Colonic mucosa (tissue), 4 donors: ENCODE measurements at regions of chr22 and their contacts with region 1.

Region 1: DNA sequence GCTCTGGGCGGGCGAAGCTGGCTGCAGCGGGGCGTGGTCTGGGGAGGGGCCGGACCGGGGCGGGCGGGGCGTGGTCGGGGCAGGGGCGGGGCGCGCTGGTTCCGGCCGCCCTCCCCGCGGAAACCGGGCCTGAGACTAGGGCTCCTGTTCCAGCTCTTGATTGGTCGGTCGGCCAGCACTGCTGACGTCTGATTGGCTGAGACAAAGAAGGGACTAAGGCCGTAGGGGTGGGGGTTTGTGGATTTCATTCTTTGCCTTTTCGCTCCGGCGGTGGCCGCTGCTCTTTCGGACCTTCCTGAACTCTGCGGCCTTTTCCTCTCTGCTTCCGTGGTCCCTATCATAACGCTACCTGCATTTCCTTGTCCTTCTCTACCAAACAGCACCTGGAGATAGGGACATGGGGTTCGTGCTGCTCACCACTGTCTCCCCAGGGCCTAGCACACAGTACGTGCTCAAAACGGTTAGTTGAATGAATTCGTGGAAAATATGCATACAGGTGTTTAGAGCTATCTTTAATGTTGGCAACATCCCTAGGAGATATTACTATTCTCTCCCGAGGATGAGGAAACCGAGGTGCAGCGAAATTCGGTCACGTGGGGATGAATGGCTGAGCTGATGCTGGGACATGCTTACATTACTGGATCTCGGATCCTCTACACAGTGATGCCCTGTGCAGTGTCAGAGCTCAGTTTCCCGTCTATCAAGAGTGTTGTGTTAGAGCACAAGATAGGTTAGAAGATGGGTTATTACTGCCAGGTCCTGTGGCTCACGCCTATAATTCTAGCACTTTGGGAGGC is 62.8 kb downstream of the NFAM1 start:
- DNase-seq: peak; percentile 96
- H3K4me3 ChIP-seq: peak overlapping the region; percentile 55
- H3K27ac ChIP-seq: peak overlapping the region; percentile 42
- H3K4me1 ChIP-seq: no peaks in the 10 kb centered on the region
- H3K27me3 ChIP-seq: no peaks in the 10 kb centered on the region
- CTCF ChIP-seq: no peak

Region 2: GRCh38 chr22:42317008-42317407 is 52.4 kb before region 1 on chr22:
- intact Hi-C with region 1: loop called (anchors 5 kb)
- DNase-seq: peak; percentile 91
- H3K4me3 ChIP-seq: peak overlapping the region; percentile 27
- H3K27ac ChIP-seq: peak overlapping the region; percentile 91
- H3K4me1 ChIP-seq: peaks cover 28% of the 10 kb centered on the region
- H3K27me3 ChIP-seq: no peaks in the 10 kb centered on the region
- CTCF ChIP-seq: no peak